AG04450 (cell line): ENCODE measurements at regions of chr5 and their contacts with region 1.

Region 1: GRCh38 chr5:149114403-149115312 is 26.6 kb upstream of the ABLIM3 start:
- DNase-seq: peak; percentile 69
- H3K4me3 ChIP-seq: no peak overlapping the region
- H3K27ac ChIP-seq: no peak overlapping the region
- H3K27me3 ChIP-seq: no peaks in the 10 kb centered on the region
- CTCF ChIP-seq: peak; percentile 87

Region 2: GRCh38 chr5:148820461-148821395 is 293.9 kb before region 1 on chr5:
- CTCF ChIA-PET with region 1: interaction called, 10 read pairs
- POLR2A ChIA-PET with region 1: no interaction called
- DNase-seq: no peak
- H3K4me3 ChIP-seq: no peak overlapping the region
- H3K27ac ChIP-seq: no peak overlapping the region
- H3K27me3 ChIP-seq: no peaks in the 10 kb centered on the region
- CTCF ChIP-seq: peak; percentile 68

Region 3: DNA sequence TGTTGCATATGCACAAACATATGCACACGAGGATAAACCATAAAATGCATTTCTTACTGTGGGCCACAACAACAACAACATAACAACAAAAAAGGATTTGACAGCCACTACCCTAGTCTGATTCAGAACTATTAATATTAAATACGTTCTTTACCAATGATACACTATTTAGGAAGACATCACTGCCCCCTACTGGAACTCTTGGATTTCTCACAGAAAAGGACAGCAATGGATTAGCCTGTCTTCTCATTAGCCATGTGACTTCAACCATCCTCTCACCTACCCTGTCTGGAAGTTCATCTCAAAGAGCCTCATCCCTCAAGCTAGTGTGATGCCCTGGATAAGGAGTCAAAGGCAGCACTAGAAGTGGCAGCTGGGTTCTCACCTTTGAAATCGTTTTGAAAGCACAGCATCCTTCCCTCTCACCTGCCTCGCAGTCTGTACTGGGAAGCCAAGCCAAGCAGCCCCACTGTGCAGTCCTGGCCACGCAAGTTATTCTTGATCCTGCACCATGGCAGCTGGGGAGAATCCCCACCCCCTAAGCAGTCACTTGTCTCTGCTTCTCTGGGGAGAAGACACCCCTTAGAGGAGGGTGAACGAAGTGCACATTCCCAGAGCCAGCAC is 116.4 kb before region 1 on chr5:
- CTCF ChIA-PET with region 1: interaction called, 19 read pairs
- POLR2A ChIA-PET with region 1: no interaction called
- DNase-seq: no peak
- H3K4me3 ChIP-seq: no peak overlapping the region
- H3K27ac ChIP-seq: no peak overlapping the region
- H3K27me3 ChIP-seq: no peaks in the 10 kb centered on the region
- CTCF ChIP-seq: peak; percentile 69

Region 4: DNA sequence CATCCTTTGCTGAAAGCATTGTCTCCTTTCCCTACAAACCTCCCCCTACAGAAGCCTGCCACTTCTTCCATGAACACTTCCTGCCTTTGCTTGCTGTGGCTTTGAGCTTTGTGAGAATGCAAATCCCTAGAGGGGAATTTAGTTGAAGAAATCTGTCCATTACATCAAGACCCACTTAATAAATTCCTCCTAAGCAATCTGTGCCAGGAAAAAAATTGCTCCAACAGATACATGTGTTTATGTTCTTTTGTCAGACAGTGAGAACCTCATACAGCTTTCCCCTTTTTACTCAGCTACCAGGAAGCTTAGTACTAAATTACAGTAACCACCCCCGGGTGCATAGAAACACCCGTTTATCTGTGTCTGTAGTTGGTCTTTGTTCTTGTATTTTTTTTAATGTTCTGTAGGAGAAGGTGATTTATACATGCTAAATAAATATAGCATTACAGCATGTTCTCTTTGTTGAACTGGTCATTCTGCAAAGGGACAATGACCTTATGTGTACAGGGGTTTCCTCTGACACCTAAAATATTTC is 95.7 kb before region 1 on chr5:
- CTCF ChIA-PET with region 1: interaction called, 12 read pairs
- POLR2A ChIA-PET with region 1: no interaction called
- DNase-seq: no peak
- H3K4me3 ChIP-seq: no peak overlapping the region
- H3K27ac ChIP-seq: no peak overlapping the region
- H3K27me3 ChIP-seq: no peaks in the 10 kb centered on the region
- CTCF ChIP-seq: no peak

Region 5: GRCh38 chr5:149128023-149128875 is 13.6 kb after region 1 on chr5:
- CTCF ChIA-PET with region 1: interaction called, 27 read pairs
- POLR2A ChIA-PET with region 1: no interaction called
- DNase-seq: no peak
- H3K4me3 ChIP-seq: no peak overlapping the region
- H3K27ac ChIP-seq: no peak overlapping the region
- H3K27me3 ChIP-seq: no peaks in the 10 kb centered on the region
- CTCF ChIP-seq: peak; percentile 92